ENCODE measurements at regions of chr4 and their contacts with region 1.

Region 1: DNA sequence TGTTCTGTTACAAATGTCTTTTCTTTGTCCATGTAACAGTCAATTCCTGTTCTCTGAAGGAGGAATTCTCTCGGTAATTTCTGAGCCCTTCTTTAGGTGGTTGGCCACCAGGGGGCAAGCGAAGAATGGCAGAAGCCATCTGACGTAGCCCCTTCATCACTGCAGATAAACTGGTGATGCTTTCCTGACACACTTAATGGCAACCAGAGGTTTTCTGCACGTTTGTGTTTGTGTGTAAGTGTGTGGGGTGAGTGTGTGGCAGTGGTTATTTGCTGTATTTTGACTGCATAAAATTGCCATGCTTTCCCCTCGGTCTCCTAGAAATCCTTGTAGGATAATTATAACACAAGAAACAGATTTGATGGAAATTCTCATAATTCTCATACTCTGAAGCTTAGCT is 64.8 kb upstream of the STOX2 start:
- DNase-seq: peak; percentile 42 to 69 (median 67)
- H3K4me3 ChIP-seq: no peak overlapping the region
- H3K4me3 Mint-ChIP-seq: no peak overlapping the region
- H3K27ac ChIP-seq: no peak overlapping the region
- H3K27ac Mint-ChIP-seq: no peak overlapping the region
- H3K4me1 ChIP-seq: no peaks in the 10 kb centered on the region
- H3K4me1 Mint-ChIP-seq: peaks cover 6% of the 10 kb centered on the region
- H3K27me3 ChIP-seq: no peaks in the 10 kb centered on the region
- H3K27me3 Mint-ChIP-seq: peaks cover 0 to 3% (median 2%) of the 10 kb centered on the region in 3 donors
- CTCF ChIP-seq: peak; percentile 85

Region 2: GRCh38 chr4:183229397-183229796 is 610.9 kb before region 1 on chr4:
- intact Hi-C with region 1: no loop called
- DNase-seq: no peak
- H3K4me3 ChIP-seq: no peak overlapping the region
- H3K4me3 Mint-ChIP-seq: no peak overlapping the region
- H3K27ac ChIP-seq: no peak overlapping the region
- H3K27ac Mint-ChIP-seq: no peak overlapping the region
- H3K4me1 ChIP-seq: no peaks in the 10 kb centered on the region
- H3K4me1 Mint-ChIP-seq: no peaks in the 10 kb centered on the region
- H3K27me3 ChIP-seq: no peaks in the 10 kb centered on the region
- H3K27me3 Mint-ChIP-seq: no peaks in the 10 kb centered on the region
- CTCF ChIP-seq: no peak

Region 3: GRCh38 chr4:184100297-184100885 is 260.1 kb after region 1 on chr4:
- intact Hi-C with region 1: loop called in 1 of 2 experiments (anchors 2 kb)
- DNase-seq: peak in 2 of 3 donors; percentile 12 to 35
- H3K4me3 ChIP-seq: no peak overlapping the region
- H3K4me3 Mint-ChIP-seq: no peak overlapping the region
- H3K27ac ChIP-seq: no peak overlapping the region
- H3K27ac Mint-ChIP-seq: no peak overlapping the region
- H3K4me1 ChIP-seq: peaks cover 3 to 7% of the 10 kb centered on the region in 2 donors
- H3K4me1 Mint-ChIP-seq: peaks cover 15% of the 10 kb centered on the region
- H3K27me3 ChIP-seq: no peaks in the 10 kb centered on the region
- H3K27me3 Mint-ChIP-seq: peaks cover 0 to 7% (median 7%) of the 10 kb centered on the region in 3 donors
- CTCF ChIP-seq: peak; percentile 64

Region 4: GRCh38 chr4:184168406-184169019 is 328.2 kb after region 1 on chr4:
- intact Hi-C with region 1: loop called (anchors 2 to 5 kb)
- DNase-seq: peak; percentile 30 to 62 (median 53)
- H3K4me3 ChIP-seq: peak overlapping the region in 1 of 3 experiments; percentile 43
- H3K4me3 Mint-ChIP-seq: peak overlapping the region in 1 of 2 donors; percentile 79
- H3K27ac ChIP-seq: no peak overlapping the region
- H3K27ac Mint-ChIP-seq: no peak overlapping the region
- H3K4me1 ChIP-seq: peaks cover 4 to 8% of the 10 kb centered on the region in 2 donors
- H3K4me1 Mint-ChIP-seq: peaks cover 7% of the 10 kb centered on the region
- H3K27me3 ChIP-seq: peaks cover 12 to 13% of the 10 kb centered on the region in 2 donors
- H3K27me3 Mint-ChIP-seq: peaks cover 27 to 50% (median 34%) of the 10 kb centered on the region in 3 donors
- CTCF ChIP-seq: peak; percentile 97

Measured in CD14-positive monocyte (primary cell).